ENCODE measurements at regions of chr7 and their contacts with region 1.

Region 1: DNA sequence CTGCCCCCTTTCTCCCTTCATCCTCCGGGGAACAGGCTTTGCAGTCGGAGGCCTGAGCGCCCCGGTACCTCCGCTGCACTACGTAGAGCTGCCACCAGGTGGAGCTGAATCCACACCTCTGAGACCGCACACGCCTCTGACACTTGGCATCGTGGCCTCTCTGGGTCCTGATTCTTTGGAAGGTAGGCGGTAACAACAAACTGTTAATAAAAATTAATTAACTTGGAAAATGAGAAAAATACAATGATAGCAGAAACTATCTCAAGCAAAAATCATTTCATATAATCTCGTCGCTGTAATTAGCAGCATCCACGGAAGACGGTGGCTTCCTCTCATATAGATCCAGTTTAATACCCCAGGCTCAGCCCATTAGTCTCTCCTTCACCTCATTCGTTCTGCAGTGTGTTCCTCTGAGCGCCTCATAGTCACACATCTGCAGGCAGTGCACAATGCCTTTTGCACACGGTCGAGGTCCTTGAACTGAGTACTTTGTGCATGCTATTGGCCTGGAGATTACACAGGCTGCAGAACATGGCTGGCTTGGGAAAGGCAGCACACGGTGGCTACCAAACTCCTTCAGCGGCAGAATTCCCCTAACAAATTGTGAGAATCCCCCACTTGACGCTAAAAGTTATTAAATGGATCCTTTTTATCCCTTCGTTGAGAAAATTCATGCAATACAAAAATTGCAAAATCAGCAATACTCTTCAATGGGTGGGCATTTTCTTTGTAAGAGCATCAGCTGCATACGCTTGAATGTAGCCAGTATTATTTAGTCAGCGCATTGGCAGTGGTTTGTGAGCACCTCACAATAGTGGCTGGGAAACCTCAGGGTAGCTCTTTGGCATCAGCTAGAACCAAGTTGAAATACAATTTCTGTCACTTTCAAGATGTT is 18.7 kb downstream of the OR9A2 start:
- DNase-seq: peak; percentile 32
- H3K4me3 ChIP-seq: no peak overlapping the region
- H3K27ac ChIP-seq: no peak overlapping the region
- H3K4me1 ChIP-seq: peaks cover 1% of the 10 kb centered on the region
- H3K27me3 ChIP-seq: no peaks in the 10 kb centered on the region
- CTCF ChIP-seq: peak; percentile 86 to 96

Region 2: GRCh38 chr7:142603870-142604448 is 404.3 kb before region 1 on chr7:
- CTCF ChIA-PET with region 1: no interaction called
- dilution Hi-C with region 1: no loop called
- in situ Hi-C with region 1: no loop called
- intact Hi-C with region 1: loop called (anchors 10 kb)
- DNase-seq: peak; percentile 32
- H3K4me3 ChIP-seq: no peak overlapping the region
- H3K27ac ChIP-seq: no peak overlapping the region
- H3K4me1 ChIP-seq: no peaks in the 10 kb centered on the region
- H3K27me3 ChIP-seq: no peaks in the 10 kb centered on the region
- CTCF ChIP-seq: peak; percentile 88 to 89

Region 3: GRCh38 chr7:142760071-142760642 is 248.1 kb before region 1 on chr7:
- CTCF ChIA-PET with region 1: no interaction called
- dilution Hi-C with region 1: no loop called
- in situ Hi-C with region 1: no loop called
- intact Hi-C with region 1: no loop called
- DNase-seq: no peak
- H3K4me3 ChIP-seq: no peak overlapping the region
- H3K27ac ChIP-seq: no peak overlapping the region
- H3K4me1 ChIP-seq: no peaks in the 10 kb centered on the region
- H3K27me3 ChIP-seq: peaks cover 6% of the 10 kb centered on the region
- CTCF ChIP-seq: no peak

Region 4: DNA sequence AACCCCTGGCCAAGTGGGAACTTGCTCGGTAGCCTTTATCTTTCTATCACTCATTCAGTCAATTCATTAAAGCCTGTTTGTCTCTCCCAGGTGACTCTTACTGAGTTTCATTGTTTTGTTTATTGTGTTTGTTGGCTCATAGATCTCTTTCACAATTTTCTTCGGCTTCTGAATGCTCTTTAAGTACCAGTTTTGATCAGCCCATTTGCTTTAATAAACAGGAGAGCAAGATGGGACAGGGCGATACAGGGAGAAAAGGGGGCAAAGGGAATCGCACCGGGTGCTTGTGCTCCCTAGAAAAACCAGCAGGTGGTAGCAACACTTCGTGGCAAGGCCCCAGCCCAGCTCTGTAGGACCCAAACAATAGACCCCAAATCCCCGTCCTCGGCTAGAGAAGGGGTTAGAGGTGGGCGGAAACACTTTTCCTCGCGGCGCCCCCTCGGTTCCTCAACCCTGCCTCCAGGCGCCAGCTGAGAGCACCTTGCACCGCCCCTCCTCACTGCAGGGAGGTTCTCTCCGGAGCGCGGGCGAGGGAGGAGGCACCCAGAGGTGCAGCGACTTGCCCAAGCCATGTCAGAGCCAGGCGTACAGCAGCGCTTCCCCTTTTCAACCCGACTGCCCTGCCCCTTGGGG is 154.4 kb before region 1 on chr7:
- CTCF ChIA-PET with region 1: no interaction called
- dilution Hi-C with region 1: no loop called
- in situ Hi-C with region 1: loop called in 1 of 2 experiments (anchors 10 kb)
- intact Hi-C with region 1: loop called (anchors 1 kb)
- DNase-seq: peak; percentile 66
- H3K4me3 ChIP-seq: peak overlapping the region; percentile 56 to 78 (median 72)
- H3K27ac ChIP-seq: no peak overlapping the region
- H3K4me1 ChIP-seq: peaks cover 14% of the 10 kb centered on the region
- H3K27me3 ChIP-seq: no peaks in the 10 kb centered on the region
- CTCF ChIP-seq: peak; percentile 79 to 86

Region 5: GRCh38 chr7:142880876-142881505 is 127.3 kb before region 1 on chr7:
- CTCF ChIA-PET with region 1: no interaction called
- dilution Hi-C with region 1: no loop called
- in situ Hi-C with region 1: no loop called
- intact Hi-C with region 1: loop called (anchors 1 kb)
- DNase-seq: no peak
- H3K4me3 ChIP-seq: no peak overlapping the region
- H3K27ac ChIP-seq: no peak overlapping the region
- H3K4me1 ChIP-seq: peaks cover 16% of the 10 kb centered on the region
- H3K27me3 ChIP-seq: no peaks in the 10 kb centered on the region
- CTCF ChIP-seq: peak; percentile 92 to 97

Region 6: GRCh38 chr7:143305423-143306070 is 297.3 kb after region 1 on chr7:
- CTCF ChIA-PET with region 1: no interaction called
- dilution Hi-C with region 1: no loop called
- in situ Hi-C with region 1: no loop called
- intact Hi-C with region 1: loop called (anchors 1 kb)
- DNase-seq: peak; percentile 41
- H3K4me3 ChIP-seq: no peak overlapping the region
- H3K27ac ChIP-seq: no peak overlapping the region
- H3K4me1 ChIP-seq: peaks cover 8% of the 10 kb centered on the region
- H3K27me3 ChIP-seq: no peaks in the 10 kb centered on the region
- CTCF ChIP-seq: peak; percentile 76 to 80

Measured in mammary epithelial cell (primary cell).